Heart left ventricle (tissue), 16 donors: ENCODE measurements at regions of chr19 and their contacts with region 1.

Region 1: GRCh38 chr19:5031231-5032100 is 62.6 kb downstream of the KDM4B start:
- DNase-seq: peak; percentile 78 to 91 (median 83)
- ATAC-seq: peak; percentile 74 to 88 (median 80)
- H3K4me3 ChIP-seq: no peak overlapping the region
- H3K27ac ChIP-seq: peak overlapping the region in 3 of 12 donors; percentile 42 to 81 (median 74)
- H3K4me1 ChIP-seq: peaks cover 4 to 63% (median 32%) of the 10 kb centered on the region in 12 donors
- H3K27me3 ChIP-seq: no peaks in the 10 kb centered on the region
- CTCF ChIP-seq: peak; percentile 90 to 96 (median 95)
- POLR2A ChIP-seq: no peak

Region 2: GRCh38 chr19:4803736-4804695 is 227.4 kb before region 1 on chr19:
- intact Hi-C with region 1: loop called in 1 of 10 experiments (anchors 5 kb)
- DNase-seq: peak; percentile 55 to 79 (median 65)
- ATAC-seq: peak in 3 of 4 donors; percentile 59 to 68 (median 68)
- H3K4me3 ChIP-seq: no peak overlapping the region
- H3K27ac ChIP-seq: peak overlapping the region in 2 of 12 donors; percentile 67 to 76
- H3K4me1 ChIP-seq: peaks cover 0 to 34% (median 11%) of the 10 kb centered on the region in 12 donors
- H3K27me3 ChIP-seq: no peaks in the 10 kb centered on the region
- CTCF ChIP-seq: peak; percentile 65 to 87 (median 77)
- POLR2A ChIP-seq: no peak

Region 3: DNA sequence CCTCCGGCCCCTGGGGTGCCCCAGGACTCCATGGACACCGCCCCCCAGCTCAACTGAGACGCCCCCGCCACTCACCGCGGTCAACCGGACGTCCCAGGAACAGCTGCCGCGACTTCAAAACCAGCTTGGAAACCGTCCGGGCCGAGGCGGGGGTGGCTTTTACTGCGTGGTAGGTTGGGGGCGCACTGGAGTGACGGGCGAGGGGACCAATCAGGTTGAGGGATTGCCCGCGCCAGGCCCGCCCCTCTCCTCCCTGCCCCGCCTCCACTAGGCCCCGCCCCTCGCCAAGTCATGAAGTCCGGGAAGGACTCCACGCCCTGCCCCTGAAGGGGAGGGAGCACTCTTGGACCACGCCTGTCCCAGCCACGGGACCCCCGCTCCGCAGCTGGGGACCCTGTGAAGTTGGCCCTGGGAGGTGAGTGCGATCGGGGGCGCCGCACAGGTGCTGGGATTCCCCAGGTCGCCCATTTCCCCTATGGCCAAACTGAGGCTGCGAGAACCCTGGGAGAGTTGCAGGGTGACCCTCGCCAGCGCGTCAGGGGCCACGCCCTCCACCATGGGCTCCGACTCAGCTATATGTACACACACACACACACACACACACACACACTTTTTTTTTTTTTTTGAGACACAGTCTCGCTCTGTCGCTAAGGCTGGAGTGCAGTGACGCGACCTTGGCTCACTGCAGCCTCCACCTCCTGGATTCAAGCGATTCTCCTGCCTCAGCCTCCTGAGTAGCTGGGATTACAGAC is 163.8 kb before region 1 on chr19 and contains the start of gene PLIN3:
- intact Hi-C with region 1: loop called in 9 of 10 experiments (anchors 1 to 5 kb)
- DNase-seq: peak; percentile 97 to 98 (median 97)
- ATAC-seq: peak; percentile 96 to 99 (median 98)
- H3K4me3 ChIP-seq: peak within 1 kb of the TSS; percentile 53 to 92 (median 80)
- H3K27ac ChIP-seq: peak within 1 kb of the TSS in 11 of 12 donors; percentile 55 to 93 (median 82)
- H3K4me1 ChIP-seq: peaks cover 0 to 35% (median 9%) of the 10 kb centered on the region in 12 donors
- H3K27me3 ChIP-seq: no peaks in the 10 kb centered on the region
- CTCF ChIP-seq: no peak
- POLR2A ChIP-seq: peak in 1 of 2 donors; percentile 66
- total RNA-seq, gene PLIN3: 17.4 to 70.9 (median 22.9) TPM

Region 4: GRCh38 chr19:4909897-4910593 is 121.4 kb before region 1 on chr19:
- intact Hi-C with region 1: loop called in 1 of 10 experiments (anchors 1 kb)
- DNase-seq: peak; percentile 92 to 96 (median 93)
- ATAC-seq: peak; percentile 89 to 98 (median 97)
- H3K4me3 ChIP-seq: peak overlapping the region; percentile 32 to 93 (median 72)
- H3K27ac ChIP-seq: peak overlapping the region in 1 of 12 donors; percentile 80
- H3K4me1 ChIP-seq: peaks cover 4 to 52% (median 20%) of the 10 kb centered on the region in 12 donors
- H3K27me3 ChIP-seq: peaks cover 0 to 10% (median 0%) of the 10 kb centered on the region in 9 donors
- CTCF ChIP-seq: no peak
- POLR2A ChIP-seq: no peak

Region 5: GRCh38 chr19:4951656-4952055 is 79.8 kb before region 1 on chr19:
- intact Hi-C with region 1: no loop called
- DNase-seq: no peak
- ATAC-seq: peak in 2 of 4 donors; percentile 28 to 42
- H3K4me3 ChIP-seq: no peak overlapping the region
- H3K27ac ChIP-seq: no peak overlapping the region
- H3K4me1 ChIP-seq: peaks cover 0 to 3% (median 0%) of the 10 kb centered on the region in 12 donors
- H3K27me3 ChIP-seq: no peaks in the 10 kb centered on the region
- CTCF ChIP-seq: no peak
- POLR2A ChIP-seq: no peak

Region 6: GRCh38 chr19:4976401-4977298 is 54.8 kb before region 1 on chr19:
- intact Hi-C with region 1: loop called in 9 of 10 experiments (anchors 2 to 10 kb)
- DNase-seq: peak; percentile 47 to 86 (median 76)
- ATAC-seq: peak; percentile 62 to 80 (median 78)
- H3K4me3 ChIP-seq: peak overlapping the region in 8 of 12 donors; percentile 1 to 22 (median 16)
- H3K27ac ChIP-seq: peak overlapping the region; percentile 60 to 86 (median 71)
- H3K4me1 ChIP-seq: peaks cover 10 to 95% (median 51%) of the 10 kb centered on the region in 12 donors
- H3K27me3 ChIP-seq: no peaks in the 10 kb centered on the region
- CTCF ChIP-seq: peak in 8 of 12 donors; percentile 18 to 49 (median 28)
- POLR2A ChIP-seq: peak in 1 of 2 donors; percentile 25

Region 7: GRCh38 chr19:5001615-5002014 is 29.9 kb before region 1 on chr19:
- intact Hi-C with region 1: no loop called
- DNase-seq: peak in 1 of 5 donors; percentile 18
- ATAC-seq: no peak
- H3K4me3 ChIP-seq: no peak overlapping the region
- H3K27ac ChIP-seq: no peak overlapping the region
- H3K4me1 ChIP-seq: peaks cover 0 to 11% (median 0%) of the 10 kb centered on the region in 12 donors
- H3K27me3 ChIP-seq: no peaks in the 10 kb centered on the region
- CTCF ChIP-seq: peak; percentile 36 to 64 (median 46)
- POLR2A ChIP-seq: no peak